Activated naive CD4-positive, alpha-beta T cell treated with anti-CD3 and anti-CD28 coated beads for 36 hours (primary cell): ENCODE measurements at regions of chr13 and their contacts with region 1.

Region 1: GRCh38 chr13:110561344-110562035 is at the start of gene RAB20:
- DNase-seq: peak; percentile 57
- H3K4me3 Mint-ChIP-seq: peak within 1 kb of the TSS; percentile 91
- H3K27ac Mint-ChIP-seq: peak within 1 kb of the TSS; percentile 48
- H3K4me1 Mint-ChIP-seq: peaks cover 15% of the 10 kb centered on the region
- H3K27me3 Mint-ChIP-seq: peaks cover 9% of the 10 kb centered on the region
- total RNA-seq, gene RAB20: 1.4 to 1.5 TPM

Region 2: DNA sequence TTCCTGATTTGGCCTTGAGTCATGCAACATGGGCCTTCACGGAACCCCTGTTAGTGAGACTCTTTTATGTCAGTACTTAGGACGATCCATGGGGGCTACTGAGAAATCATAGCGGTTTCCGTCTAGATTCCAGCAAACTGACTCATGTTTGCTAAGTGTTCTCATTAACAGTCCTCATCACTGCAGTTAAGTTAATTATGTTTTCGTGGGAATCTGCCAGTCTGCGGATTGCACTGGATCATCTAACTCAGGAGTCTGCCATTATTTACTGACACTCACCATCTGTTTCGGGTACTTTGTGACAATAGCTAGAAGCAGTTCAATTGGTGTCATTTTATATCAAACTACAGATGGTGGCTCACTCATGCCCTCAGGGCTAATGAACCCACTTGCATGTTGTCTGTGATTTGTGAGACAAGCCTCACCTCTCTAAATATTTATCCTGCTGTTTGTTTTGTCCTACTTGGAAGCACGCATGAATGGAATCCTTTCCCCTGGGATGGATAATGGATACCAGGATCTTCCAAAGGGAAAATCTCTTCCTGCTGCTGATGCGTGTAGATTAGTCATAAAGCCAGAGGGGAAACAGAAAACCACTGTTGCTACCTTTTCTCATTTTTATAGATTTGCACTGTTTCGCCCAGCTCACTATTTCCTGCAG is 61.7 kb before region 1 on chr13:
- CTCF ChIA-PET with region 1: no interaction called
- intact Hi-C with region 1: no loop called
- DNase-seq: no peak
- H3K4me3 Mint-ChIP-seq: no peak overlapping the region
- H3K27ac Mint-ChIP-seq: no peak overlapping the region
- H3K4me1 Mint-ChIP-seq: no peaks in the 10 kb centered on the region
- H3K27me3 Mint-ChIP-seq: no peaks in the 10 kb centered on the region

Region 3: DNA sequence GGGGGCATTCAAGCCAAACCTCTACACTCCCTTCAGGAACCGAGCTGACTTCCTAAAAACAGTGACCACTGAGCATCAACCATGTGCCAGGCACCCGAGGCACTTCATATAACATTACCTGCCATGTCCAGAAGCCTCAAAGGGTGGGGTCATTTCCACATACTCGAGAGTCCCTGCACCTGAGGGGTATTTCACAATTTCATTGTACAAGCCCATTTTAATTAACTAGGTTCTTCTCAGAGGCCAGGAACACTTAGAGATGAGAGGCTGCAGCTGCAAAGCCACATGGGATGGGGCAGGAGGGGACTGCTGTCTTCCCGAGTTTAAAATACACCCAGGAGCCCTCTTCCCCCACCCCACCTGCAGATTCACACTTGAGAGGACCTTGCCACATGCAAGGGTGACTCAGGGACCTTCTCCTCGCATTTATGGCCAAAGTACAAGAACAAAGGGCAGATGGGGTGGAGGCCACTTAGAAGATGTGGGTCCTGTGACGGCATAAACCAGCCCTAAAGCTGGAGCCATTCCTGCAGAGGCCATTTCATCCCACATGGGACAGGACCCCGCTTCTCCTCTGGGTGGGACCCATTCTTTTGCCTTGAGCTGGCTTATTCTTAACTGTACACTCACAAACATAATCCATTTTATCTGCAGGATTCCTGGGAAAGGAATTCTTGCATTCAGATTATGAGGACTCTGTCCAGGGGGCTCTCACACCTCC is 43.8 kb before region 1 on chr13:
- CTCF ChIA-PET with region 1: no interaction called
- intact Hi-C with region 1: loop called (anchors 5 kb)
- DNase-seq: no peak
- H3K4me3 Mint-ChIP-seq: no peak overlapping the region
- H3K27ac Mint-ChIP-seq: no peak overlapping the region
- H3K4me1 Mint-ChIP-seq: peaks cover 6% of the 10 kb centered on the region
- H3K27me3 Mint-ChIP-seq: no peaks in the 10 kb centered on the region

Region 4: GRCh38 chr13:110615322-110616102 is 54.0 kb after region 1 on chr13 and contains the start of gene NAXD:
- CTCF ChIA-PET with region 1: no interaction called
- intact Hi-C with region 1: loop called (anchors 2 kb)
- DNase-seq: peak; percentile 94
- H3K4me3 Mint-ChIP-seq: peak within 1 kb of the TSS; percentile 89
- H3K27ac Mint-ChIP-seq: peak within 1 kb of the TSS; percentile 89
- H3K4me1 Mint-ChIP-seq: peaks cover 40% of the 10 kb centered on the region
- H3K27me3 Mint-ChIP-seq: no peaks in the 10 kb centered on the region
- total RNA-seq, gene NAXD: 20.8 to 23.3 TPM